Head of caudate nucleus (tissue), 42 donors: ENCODE measurements at regions of chr19 and their contacts with region 1.

Region 1: DNA sequence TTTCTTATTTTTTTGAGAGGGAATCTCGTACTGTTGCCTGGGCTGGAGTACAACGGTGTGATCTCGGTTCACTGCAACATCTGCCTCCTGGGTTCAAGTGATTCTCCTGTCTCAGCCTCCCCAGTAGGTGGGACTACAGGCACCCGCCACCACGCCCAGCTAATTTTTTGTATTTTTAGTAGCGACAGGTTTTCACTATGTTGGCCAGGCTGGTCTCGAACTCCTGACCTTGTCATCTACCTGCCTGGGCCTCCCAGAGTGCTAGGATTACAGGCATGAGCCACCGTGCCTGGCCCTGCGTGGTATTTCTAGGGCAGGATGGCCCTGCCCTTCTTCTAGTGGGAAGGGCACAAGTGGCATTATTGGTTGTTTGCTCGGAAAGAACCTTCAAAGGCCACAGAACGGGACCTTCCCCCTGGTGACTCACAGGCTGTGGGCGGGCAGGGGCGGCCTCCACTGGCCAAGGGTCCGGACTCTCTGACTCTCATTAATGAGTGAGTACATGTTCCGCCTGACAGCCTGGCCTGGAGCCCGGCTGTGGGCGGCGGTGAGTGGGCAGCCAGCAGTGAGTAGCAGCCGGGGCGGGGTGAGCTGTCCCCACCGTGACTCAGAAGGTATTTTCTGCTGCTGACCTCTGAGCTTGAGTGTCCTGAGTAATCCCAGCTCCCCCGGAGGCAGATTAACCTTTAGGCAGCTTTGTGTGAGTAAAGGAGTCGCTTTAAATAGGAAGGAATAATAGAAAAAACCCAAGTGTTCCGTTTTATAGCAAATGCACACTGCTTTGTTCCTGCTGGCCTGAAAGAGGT is 5.1 kb downstream of the DOT1L start:
- DNase-seq: peak; percentile 58 to 98 (median 86)

Region 2: GRCh38 chr19:2221918-2222317 is 53.1 kb after region 1 on chr19:
- intact Hi-C with region 1: no loop called
- DNase-seq: no peak

Region 3: DNA sequence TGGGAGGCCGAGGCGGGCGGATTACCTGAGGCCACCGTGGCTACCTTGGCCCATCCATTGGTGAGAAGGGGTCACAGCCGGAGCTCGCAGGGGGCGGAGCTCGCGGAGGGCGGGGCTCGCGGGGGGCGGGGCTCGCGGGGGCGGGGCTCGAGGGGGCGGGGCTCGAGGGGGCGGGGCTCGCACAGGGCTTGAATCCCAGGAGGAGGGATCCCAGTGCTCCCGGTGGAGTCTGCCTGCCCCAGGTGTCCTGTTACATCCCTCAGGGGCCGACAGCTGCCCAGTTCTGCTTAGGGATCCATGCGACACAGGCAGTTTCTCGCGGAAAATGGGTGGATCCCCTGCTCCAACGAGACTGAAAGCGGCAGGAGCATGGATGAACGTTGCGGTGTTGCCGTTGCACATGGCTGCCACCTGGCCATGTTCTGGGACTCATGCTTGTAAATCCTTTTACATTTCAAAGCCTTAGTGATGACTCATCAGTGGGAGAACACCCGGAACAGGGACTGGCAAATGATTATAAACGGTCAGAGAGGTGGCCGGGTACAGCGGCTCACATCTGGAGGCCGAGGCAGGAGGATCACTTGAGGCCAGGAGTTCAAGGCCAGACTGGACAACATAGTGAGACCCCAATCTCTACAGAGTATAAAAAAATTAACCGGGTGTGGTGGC is 216.4 kb after region 1 on chr19:
- intact Hi-C with region 1: loop called (anchors 10 kb)
- DNase-seq: peak in 31 of 42 donors; percentile 10 to 68 (median 32)